Activated naive CD4-positive, alpha-beta T cell treated with anti-CD3 and anti-CD28 coated beads for 36 hours (primary cell): ENCODE measurements at regions of chr11 and their contacts with region 1.

Region 1: DNA sequence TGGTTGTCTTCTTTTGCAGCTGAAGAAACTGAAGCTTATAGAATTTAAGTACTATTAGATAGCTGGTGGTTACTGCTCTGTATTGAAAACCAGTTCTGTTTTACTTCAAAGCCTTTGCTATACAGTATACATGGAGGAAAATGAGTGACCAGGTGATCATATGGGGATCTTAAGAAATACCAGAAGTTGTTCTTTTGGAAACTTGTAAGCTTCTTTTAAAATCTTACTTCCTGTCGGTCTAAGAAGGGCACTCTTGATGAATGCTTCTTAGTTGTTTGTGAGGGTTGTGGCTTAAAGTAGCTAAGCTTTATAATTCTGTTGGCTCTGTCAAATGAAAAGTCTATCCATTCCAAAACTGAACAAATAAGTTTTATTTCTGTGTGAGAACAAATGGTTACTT is 55.2 kb downstream of the PDE3B start:
- DNase-seq: no peak
- H3K4me3 Mint-ChIP-seq: peak overlapping the region; percentile 52
- H3K27ac Mint-ChIP-seq: peak overlapping the region; percentile 59
- H3K4me1 Mint-ChIP-seq: peaks cover 46% of the 10 kb centered on the region
- H3K27me3 Mint-ChIP-seq: no peaks in the 10 kb centered on the region

Region 2: GRCh38 chr11:14676068-14676467 is 22.7 kb before region 1 on chr11:
- CTCF ChIA-PET with region 1: no interaction called
- intact Hi-C with region 1: loop called (anchors 1 kb)
- DNase-seq: no peak
- H3K4me3 Mint-ChIP-seq: no peak overlapping the region
- H3K27ac Mint-ChIP-seq: no peak overlapping the region
- H3K4me1 Mint-ChIP-seq: peaks cover 55% of the 10 kb centered on the region
- H3K27me3 Mint-ChIP-seq: no peaks in the 10 kb centered on the region

Region 3: DNA sequence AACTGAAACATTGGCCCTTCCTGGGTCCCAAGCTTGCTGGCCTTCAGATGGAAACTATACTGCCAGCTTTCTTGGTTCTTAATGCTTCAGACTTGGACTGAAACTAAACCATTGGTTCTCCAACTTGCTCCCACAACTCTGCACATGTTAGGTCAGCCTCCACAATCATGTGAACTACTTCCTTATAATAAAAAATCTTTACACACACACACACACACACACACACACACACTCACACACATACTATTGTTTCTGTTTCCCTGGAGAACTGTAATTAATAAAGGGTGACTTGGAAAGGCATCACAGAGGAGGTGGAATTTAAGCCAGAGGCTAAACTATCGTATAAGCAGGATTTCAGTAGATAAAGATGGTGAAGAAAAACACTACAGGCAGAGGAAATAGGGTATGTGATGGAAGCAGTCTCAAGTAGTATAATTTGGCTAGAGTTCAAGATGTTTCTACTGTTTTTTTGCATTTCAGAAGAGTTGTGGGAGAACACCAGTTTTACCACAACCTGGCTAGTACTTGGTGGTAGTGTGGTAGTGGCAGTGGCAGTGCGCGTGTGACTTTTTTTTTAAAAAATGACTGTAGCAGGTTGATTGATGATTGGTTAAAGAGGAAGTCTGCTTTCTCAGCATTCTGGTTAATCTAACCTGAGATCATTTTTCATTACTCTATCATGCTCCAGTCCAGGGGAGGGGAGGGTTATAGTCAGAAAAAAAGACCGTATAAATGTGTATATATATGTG is 14.9 kb after region 1 on chr11:
- CTCF ChIA-PET with region 1: no interaction called
- intact Hi-C with region 1: loop called (anchors 2 kb)
- DNase-seq: peak; percentile 55
- H3K4me3 Mint-ChIP-seq: peak overlapping the region; percentile 72
- H3K27ac Mint-ChIP-seq: peak overlapping the region; percentile 87
- H3K4me1 Mint-ChIP-seq: peaks cover 46% of the 10 kb centered on the region
- H3K27me3 Mint-ChIP-seq: no peaks in the 10 kb centered on the region